Caco-2 (cell line): ENCODE measurements at regions of chr12 and their contacts with region 1.

Region 1: GRCh38 chr12:116697305-116697704 is 40.6 kb downstream of the SPRING1 start:
- DNase-seq: peak; percentile 75 to 77
- H3K4me3 ChIP-seq: no peak overlapping the region
- H3K4me3 Mint-ChIP-seq: peak overlapping the region; percentile 29
- H3K27ac Mint-ChIP-seq: peak overlapping the region; percentile 29
- H3K4me1 ChIP-seq: peaks cover 14% of the 10 kb centered on the region
- H3K4me1 Mint-ChIP-seq: peaks cover 23% of the 10 kb centered on the region
- H3K27me3 ChIP-seq: no peaks in the 10 kb centered on the region; the same call in 1 of the 2 replicates
- H3K27me3 Mint-ChIP-seq: no peaks in the 10 kb centered on the region
- CTCF ChIP-seq: peak; percentile 36 to 39

Region 2: GRCh38 chr12:116423094-116423493 is 274.2 kb before region 1 on chr12:
- CTCF ChIA-PET with region 1: no interaction called
- POLR2A ChIA-PET with region 1: no interaction called
- intact Hi-C with region 1: no loop called
- DNase-seq: no peak
- H3K4me3 ChIP-seq: no peak overlapping the region
- H3K4me3 Mint-ChIP-seq: no peak overlapping the region
- H3K27ac Mint-ChIP-seq: peak overlapping the region; percentile 27
- H3K4me1 ChIP-seq: peaks cover 31% of the 10 kb centered on the region
- H3K4me1 Mint-ChIP-seq: peaks cover 10% of the 10 kb centered on the region
- H3K27me3 ChIP-seq: no peaks in the 10 kb centered on the region
- H3K27me3 Mint-ChIP-seq: no peaks in the 10 kb centered on the region
- CTCF ChIP-seq: no peak

Region 3: DNA sequence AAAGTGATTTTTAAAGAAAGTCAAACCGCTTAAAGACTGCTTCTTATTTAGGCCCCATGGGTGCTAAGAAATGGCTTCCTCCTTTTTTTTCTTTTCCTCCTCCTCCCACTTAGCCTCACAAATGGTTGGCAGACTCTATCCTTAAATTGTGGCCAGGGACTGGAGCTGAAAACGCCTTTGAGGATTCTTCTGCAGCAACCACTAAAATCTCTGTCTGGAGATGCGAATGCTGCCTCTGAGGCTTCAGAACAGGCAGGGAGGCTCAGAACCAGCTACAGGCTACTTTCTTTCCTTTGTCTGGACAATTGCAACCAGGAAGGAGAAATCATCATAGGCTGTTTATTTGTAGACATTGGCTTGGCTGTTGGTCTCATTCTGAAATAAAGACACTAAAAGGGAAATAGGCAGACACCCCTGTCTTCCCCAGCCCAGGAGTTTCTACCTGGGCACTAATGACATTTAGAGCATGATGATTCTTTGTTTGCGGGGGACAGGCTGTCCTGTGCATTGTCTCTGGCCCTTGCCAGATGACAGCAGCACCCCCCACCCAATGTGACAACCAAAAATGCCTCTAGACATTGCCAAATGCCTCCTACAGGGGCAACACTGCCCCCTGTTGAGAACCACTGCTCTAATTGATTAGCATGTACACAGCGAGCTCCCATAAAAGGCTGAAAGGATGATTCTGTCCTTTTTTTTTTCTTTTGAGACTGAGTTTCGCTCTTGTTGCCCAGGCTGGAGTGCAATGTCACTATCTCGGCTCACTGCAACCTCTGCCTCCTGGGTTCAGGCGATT is 87.8 kb before region 1 on chr12:
- CTCF ChIA-PET with region 1: no interaction called
- POLR2A ChIA-PET with region 1: no interaction called
- intact Hi-C with region 1: loop called (anchors 5 kb)
- DNase-seq: peak; percentile 54 to 55
- H3K4me3 ChIP-seq: no peak overlapping the region
- H3K4me3 Mint-ChIP-seq: no peak overlapping the region
- H3K27ac Mint-ChIP-seq: peak overlapping the region; percentile 32
- H3K4me1 ChIP-seq: peaks cover 25% of the 10 kb centered on the region
- H3K4me1 Mint-ChIP-seq: peaks cover 38% of the 10 kb centered on the region
- H3K27me3 ChIP-seq: no peaks in the 10 kb centered on the region
- H3K27me3 Mint-ChIP-seq: no peaks in the 10 kb centered on the region
- CTCF ChIP-seq: peak in 1 of 2 experiments; percentile 10

Region 4: DNA sequence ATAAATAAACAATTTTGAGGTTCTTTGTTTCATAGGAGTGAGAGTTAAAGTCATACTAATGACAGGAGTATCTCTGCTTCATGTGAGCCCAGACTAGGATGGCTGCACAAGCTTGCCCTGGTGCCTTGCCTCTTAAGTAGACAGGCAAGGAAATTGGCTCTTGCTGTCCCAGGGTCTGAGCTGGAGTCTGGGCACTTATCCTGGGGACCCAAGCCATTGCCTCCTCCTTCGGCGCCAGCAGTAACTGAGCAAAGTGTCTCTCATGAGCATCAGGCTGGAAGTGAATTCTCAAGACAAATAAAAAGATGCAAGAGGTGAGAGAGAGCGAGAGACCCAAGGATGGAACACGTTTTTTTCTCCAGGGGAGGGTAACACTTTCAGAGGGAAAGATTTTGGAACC is 206.5 kb after region 1 on chr12:
- CTCF ChIA-PET with region 1: no interaction called
- POLR2A ChIA-PET with region 1: no interaction called
- intact Hi-C with region 1: no loop called
- DNase-seq: no peak
- H3K4me3 ChIP-seq: no peak overlapping the region
- H3K4me3 Mint-ChIP-seq: no peak overlapping the region
- H3K27ac Mint-ChIP-seq: no peak overlapping the region
- H3K4me1 ChIP-seq: no peaks in the 10 kb centered on the region
- H3K4me1 Mint-ChIP-seq: no peaks in the 10 kb centered on the region
- H3K27me3 ChIP-seq: 0 out of 2 replicates have a peak, but pooled peaks cover 1% of the 10 kb centered on the region
- H3K27me3 Mint-ChIP-seq: peaks cover 13% of the 10 kb centered on the region
- CTCF ChIP-seq: no peak